Heart right ventricle (tissue), 16 donors: ENCODE measurements at regions of chr12 and their contacts with region 1.

Region 1: GRCh38 chr12:23204933-23205778 is 580.2 kb downstream of the ETNK1 start:
- DNase-seq: peak in 1 of 2 donors; percentile 28
- ATAC-seq: peak in 4 of 8 donors; percentile 51 to 70 (median 64)
- H3K4me3 ChIP-seq: no peak overlapping the region
- H3K27ac ChIP-seq: no peak overlapping the region
- H3K4me1 ChIP-seq: no peaks in the 10 kb centered on the region
- H3K27me3 ChIP-seq: no peaks in the 10 kb centered on the region
- CTCF ChIP-seq: peak; percentile 86 to 96 (median 88)

Region 2: DNA sequence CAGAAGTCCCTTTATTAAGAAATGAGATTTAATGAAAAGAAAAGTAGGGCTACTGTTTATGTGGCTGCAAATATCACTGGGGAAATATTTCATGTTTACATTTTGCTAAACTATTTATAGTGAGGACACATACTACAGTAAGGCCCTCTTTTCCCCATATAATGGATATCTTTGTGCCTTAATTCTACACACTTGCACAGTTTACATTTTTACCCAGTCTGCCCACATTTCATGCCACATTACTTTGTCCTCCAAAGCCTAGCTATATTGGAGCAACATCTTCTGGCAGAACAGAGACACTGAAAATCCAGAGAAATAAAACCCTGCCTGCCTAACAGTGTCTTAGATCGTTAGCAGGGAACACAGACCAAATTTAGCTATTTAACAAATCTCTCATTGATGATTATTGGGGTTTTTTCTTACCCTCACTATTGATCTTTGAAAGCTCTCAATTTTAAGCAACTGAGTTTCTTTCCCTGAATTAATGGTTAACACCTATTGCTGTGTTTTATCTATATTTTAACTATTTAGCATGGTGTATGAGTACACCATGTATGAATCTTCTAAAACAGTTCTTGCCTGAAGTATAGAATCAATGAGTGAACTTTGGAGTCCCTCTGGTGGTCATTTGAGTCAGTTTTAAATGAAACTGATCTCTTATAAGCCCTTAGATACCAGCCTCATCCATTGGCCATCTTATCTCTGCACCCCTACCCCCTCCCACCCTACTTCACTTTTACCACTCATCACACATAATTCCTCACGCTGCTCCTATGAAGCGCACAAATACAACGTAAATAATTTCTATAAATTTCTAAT is 1573.5 kb after region 1 on chr12:
- intact Hi-C with region 1: loop called in 1 of 10 experiments (anchors 5 kb)
- DNase-seq: no peak
- ATAC-seq: peak in 1 of 8 donors; percentile 49
- H3K4me3 ChIP-seq: no peak overlapping the region
- H3K27ac ChIP-seq: no peak overlapping the region
- H3K4me1 ChIP-seq: peaks cover 0 to 6% (median 0%) of the 10 kb centered on the region in 9 donors
- H3K27me3 ChIP-seq: peaks cover 0 to 2% (median 0%) of the 10 kb centered on the region in 7 donors
- CTCF ChIP-seq: peak in 6 of 9 donors; percentile 14 to 51 (median 36)

Region 3: DNA sequence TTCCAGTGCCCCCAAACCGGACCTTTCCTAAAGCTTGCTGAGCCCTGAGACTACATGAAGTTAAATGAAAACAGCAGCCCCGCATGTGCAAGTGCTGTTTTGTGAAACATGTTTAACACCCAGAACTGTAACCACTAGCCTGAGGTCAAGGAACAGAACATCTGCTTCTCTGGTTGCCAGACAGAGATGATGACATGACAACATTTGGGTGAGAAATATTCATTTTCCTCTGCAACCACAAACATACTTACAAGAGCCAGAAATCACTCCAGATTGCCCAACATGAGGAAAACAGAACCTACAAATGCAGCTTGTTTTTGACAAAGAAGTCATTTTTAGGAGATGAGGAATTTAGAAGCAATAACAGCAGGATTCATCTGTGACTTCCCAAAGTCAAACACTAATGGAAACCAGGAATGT is 1633.4 kb after region 1 on chr12:
- intact Hi-C with region 1: loop called in 1 of 10 experiments (anchors 10 kb)
- DNase-seq: peak in 1 of 2 donors; percentile 10
- ATAC-seq: peak in 7 of 8 donors; percentile 76 to 92 (median 85)
- H3K4me3 ChIP-seq: no peak overlapping the region
- H3K27ac ChIP-seq: peak overlapping the region in 1 of 10 donors; percentile 67
- H3K4me1 ChIP-seq: peaks cover 0 to 30% (median 0%) of the 10 kb centered on the region in 9 donors
- H3K27me3 ChIP-seq: no peaks in the 10 kb centered on the region
- CTCF ChIP-seq: no peak